ENCODE measurements at regions of chr7 and their contacts with region 1.

Region 1: DNA sequence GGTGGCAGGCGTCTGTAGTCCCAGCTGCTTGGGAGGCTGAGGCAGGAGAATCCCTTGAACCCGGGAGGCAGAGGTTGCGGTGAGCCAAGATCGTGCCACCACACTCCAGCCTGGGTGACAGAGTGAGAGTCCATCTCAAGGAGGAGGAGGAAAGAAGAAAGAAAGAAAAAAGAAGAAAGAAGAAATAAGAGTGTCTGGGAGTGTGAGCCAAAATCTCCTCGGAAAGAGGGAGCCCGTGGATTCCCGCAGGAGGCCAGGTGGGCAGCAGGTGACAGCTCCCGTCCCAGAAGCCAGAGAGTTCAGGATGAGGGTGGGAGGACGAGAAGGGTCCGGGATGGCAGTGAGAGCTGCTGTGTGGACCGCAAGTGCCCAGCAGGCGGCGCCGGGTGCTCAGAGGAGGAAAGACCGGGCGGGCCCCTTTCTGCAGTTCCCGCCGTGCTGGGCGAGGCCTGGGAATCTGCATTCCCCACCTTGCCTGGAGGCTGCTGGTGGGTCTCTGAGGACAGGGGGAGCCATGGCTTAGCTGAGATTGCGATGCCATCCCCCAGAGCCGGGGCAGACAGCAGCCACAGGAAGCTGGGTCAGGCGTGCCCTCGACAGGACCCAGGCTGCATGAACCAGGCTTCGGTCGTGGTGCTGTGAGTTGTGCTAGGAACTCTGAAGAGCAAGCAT is 17.1 kb upstream of the AMZ1 start:
- DNase-seq: peak; percentile 72 to 83
- ATAC-seq: peak; percentile 86 to 95
- H3K4me3 ChIP-seq: no peak overlapping the region
- H3K27ac ChIP-seq: no peak overlapping the region
- H3K4me1 ChIP-seq: no peaks in the 10 kb centered on the region
- CTCF ChIP-seq: peak; percentile 79
- EP300 ChIP-seq: no peak
- POLR2A ChIP-seq: no peak
- RAD21 ChIP-seq: peak; percentile 83 to 85

Region 2: DNA sequence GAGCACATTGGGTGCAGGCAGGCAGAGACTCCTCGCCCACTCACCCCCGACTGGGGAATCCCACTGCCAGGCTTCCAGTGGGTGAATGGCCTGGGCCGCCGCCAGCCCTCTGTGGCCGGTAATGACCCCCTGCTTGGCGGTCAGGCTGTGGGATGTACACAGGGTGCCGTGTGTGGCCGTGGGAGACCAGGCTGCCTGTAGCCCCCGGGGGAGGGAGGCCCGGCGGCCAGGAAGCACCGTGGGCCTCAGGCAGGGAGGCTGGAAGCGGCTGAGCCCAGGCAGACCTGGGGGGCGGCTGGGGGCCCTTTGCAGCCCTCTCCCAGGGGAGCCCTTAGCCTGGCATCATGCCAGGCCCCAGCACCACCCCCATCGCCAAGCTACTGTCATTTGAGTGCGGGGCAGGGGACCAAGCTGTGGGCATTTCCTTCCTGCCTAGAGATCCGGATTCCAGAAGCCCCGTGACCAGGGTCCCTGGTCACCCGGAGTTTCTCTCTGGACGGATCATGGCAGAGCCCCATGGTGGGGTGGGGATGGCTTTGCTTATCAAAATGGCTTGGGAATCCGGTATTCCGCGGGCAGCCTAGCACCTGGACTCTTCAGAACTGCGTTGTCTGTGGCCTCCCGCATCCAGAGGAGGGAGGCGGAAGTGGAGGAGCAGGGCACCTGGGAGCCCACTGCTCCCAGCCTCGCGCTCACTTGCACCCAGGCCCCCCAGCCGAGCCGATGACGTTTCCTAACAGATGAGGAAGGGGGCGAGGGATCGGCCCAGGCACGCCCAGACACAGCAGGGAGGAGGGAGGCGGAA is 37.9 kb before region 1 on chr7:
- CTCF ChIA-PET with region 1: interaction called, 10 read pairs
- POLR2A ChIA-PET with region 1: no interaction called
- DNase-seq: peak; percentile 57 to 63
- ATAC-seq: peak; percentile 35 to 69
- H3K4me3 ChIP-seq: peak overlapping the region; percentile 89
- H3K27ac ChIP-seq: peak overlapping the region; percentile 84 to 95
- H3K4me1 ChIP-seq: peaks cover 33% of the 10 kb centered on the region
- CTCF ChIP-seq: no peak
- EP300 ChIP-seq: no peak
- POLR2A ChIP-seq: peak; percentile 32; the same call in 1 of the 2 replicates
- RAD21 ChIP-seq: no peak

Region 3: GRCh38 chr7:2641406-2642393 is 29.2 kb before region 1 on chr7:
- CTCF ChIA-PET with region 1: interaction called, 10 read pairs
- POLR2A ChIA-PET with region 1: interaction called, 3 read pairs
- DNase-seq: no peak
- ATAC-seq: peak in 1 of 2 experiments; percentile 5; a peak in 2 of 6 replicates
- H3K4me3 ChIP-seq: no peak overlapping the region
- H3K27ac ChIP-seq: peak overlapping the region in 1 of 2 experiments; percentile 65; a peak in 2 of 6 replicates
- H3K4me1 ChIP-seq: peaks cover 32% of the 10 kb centered on the region
- CTCF ChIP-seq: no peak
- EP300 ChIP-seq: no peak
- POLR2A ChIP-seq: no peak
- RAD21 ChIP-seq: no peak

Region 4: GRCh38 chr7:2651847-2652735 is 18.8 kb before region 1 on chr7:
- CTCF ChIA-PET with region 1: interaction called, 28 read pairs
- POLR2A ChIA-PET with region 1: interaction called, 3 read pairs
- DNase-seq: no peak
- ATAC-seq: no peak
- H3K4me3 ChIP-seq: no peak overlapping the region
- H3K27ac ChIP-seq: no peak overlapping the region
- H3K4me1 ChIP-seq: 0 out of 3 replicates have a peak, but pooled peaks cover 3% of the 10 kb centered on the region
- CTCF ChIP-seq: no peak
- EP300 ChIP-seq: no peak
- POLR2A ChIP-seq: no peak
- RAD21 ChIP-seq: no peak

Region 5: GRCh38 chr7:2660585-2661408 is 10.1 kb before region 1 on chr7:
- CTCF ChIA-PET with region 1: interaction called, 28 read pairs
- POLR2A ChIA-PET with region 1: interaction called, 3 read pairs
- DNase-seq: no peak
- ATAC-seq: peak in 1 of 2 experiments; percentile 11; a peak in 3 of 6 replicates
- H3K4me3 ChIP-seq: no peak overlapping the region
- H3K27ac ChIP-seq: no peak overlapping the region
- H3K4me1 ChIP-seq: no peaks in the 10 kb centered on the region
- CTCF ChIP-seq: peak; percentile 30; the same call in 1 of the 3 replicates
- EP300 ChIP-seq: no peak
- POLR2A ChIP-seq: no peak
- RAD21 ChIP-seq: no peak

Region 6: DNA sequence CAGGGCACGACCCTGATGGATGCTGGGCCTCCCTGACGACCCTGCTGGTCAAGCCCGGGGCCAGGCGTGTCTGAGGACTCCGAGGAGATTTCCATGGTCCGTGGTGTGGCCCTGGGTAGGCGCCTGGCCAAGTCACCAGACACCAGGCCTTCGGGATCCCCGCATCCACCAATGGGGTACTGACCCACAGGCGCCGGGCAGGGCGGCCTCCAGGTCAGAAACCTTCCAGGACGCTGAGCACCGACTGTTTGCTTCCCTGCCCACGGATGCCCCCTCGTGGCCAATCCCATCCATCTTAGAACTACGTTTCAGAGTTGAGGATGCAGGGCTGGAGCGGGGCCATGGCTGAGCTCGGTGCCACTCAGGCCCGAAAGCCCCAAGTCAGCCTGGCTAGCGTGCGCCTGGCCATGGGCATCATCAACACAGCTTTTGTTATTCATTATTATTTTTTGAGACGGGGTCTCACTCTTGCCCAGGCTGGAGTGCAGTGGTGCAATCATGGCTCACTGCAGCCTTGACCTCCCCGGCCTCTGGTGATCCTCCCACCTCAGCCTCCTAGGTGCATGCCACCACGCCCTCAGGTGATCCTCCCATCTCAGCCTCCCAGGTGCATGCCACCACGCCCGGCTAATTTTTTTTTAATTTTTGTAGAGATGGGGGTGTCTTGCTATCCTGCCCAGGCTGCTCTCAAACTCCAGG is 10.1 kb after region 1 on chr7:
- CTCF ChIA-PET with region 1: interaction called, 108 read pairs
- POLR2A ChIA-PET with region 1: no interaction called
- DNase-seq: peak; percentile 77 to 93
- ATAC-seq: peak; percentile 82 to 94
- H3K4me3 ChIP-seq: no peak overlapping the region
- H3K27ac ChIP-seq: no peak overlapping the region
- H3K4me1 ChIP-seq: no peaks in the 10 kb centered on the region
- CTCF ChIP-seq: peak; percentile 79
- EP300 ChIP-seq: no peak
- POLR2A ChIP-seq: no peak
- RAD21 ChIP-seq: peak; percentile 83 to 88

Region 7: GRCh38 chr7:2688409-2689331 is 17.8 kb after region 1 on chr7:
- CTCF ChIA-PET with region 1: interaction called, 108 read pairs
- POLR2A ChIA-PET with region 1: no interaction called
- DNase-seq: no peak
- ATAC-seq: peak in 1 of 2 experiments; percentile 19; a peak in 1 of 6 replicates
- H3K4me3 ChIP-seq: no peak overlapping the region
- H3K27ac ChIP-seq: peak overlapping the region in 1 of 2 experiments; percentile 58; a peak in 2 of 6 replicates
- H3K4me1 ChIP-seq: 0 out of 3 replicates have a peak, but pooled peaks cover 4% of the 10 kb centered on the region
- CTCF ChIP-seq: no peak
- EP300 ChIP-seq: no peak
- POLR2A ChIP-seq: no peak
- RAD21 ChIP-seq: no peak

Region 8: GRCh38 chr7:3120513-3120912 is 449.7 kb after region 1 on chr7:
- CTCF ChIA-PET with region 1: no interaction called
- POLR2A ChIA-PET with region 1: no interaction called
- DNase-seq: no peak
- ATAC-seq: no peak
- H3K4me3 ChIP-seq: no peak overlapping the region
- H3K27ac ChIP-seq: no peak overlapping the region
- H3K4me1 ChIP-seq: no peaks in the 10 kb centered on the region
- CTCF ChIP-seq: no peak
- EP300 ChIP-seq: no peak
- POLR2A ChIP-seq: no peak
- RAD21 ChIP-seq: no peak